Activated naive CD4-positive, alpha-beta T cell treated with anti-CD3 and anti-CD28 coated beads for 36 hours (primary cell): ENCODE measurements at regions of chr19 and their contacts with region 1.

Region 1: GRCh38 chr19:19732579-19733501 is at the start of gene ZNF14:
- DNase-seq: peak; percentile 98
- H3K4me3 Mint-ChIP-seq: peak within 1 kb of the TSS; percentile 97
- H3K27ac Mint-ChIP-seq: peak within 1 kb of the TSS; percentile 96
- H3K4me1 Mint-ChIP-seq: peaks cover 20% of the 10 kb centered on the region
- H3K27me3 Mint-ChIP-seq: no peaks in the 10 kb centered on the region
- total RNA-seq, gene ZNF14: 8.4 TPM

Region 2: DNA sequence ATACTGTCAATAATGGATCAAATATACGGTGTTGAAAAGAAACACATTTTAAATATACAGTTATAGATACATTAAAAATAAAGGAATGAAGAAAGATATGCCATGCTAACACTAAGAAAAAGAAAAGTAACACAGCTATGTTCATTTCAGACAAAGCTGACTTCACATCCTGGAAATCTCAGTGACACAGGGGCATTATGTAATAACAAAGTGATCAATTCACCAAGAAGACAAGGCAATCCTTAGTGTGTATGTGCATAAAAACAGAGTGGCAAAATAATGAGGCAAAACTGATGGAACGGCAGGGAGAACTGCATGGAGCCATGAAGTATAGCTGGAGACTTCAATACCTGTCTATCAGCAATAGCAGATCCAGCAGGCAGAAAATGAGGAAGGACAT is 13.0 kb before region 1 on chr19:
- CTCF ChIA-PET with region 1: interaction called, 4 read pairs
- intact Hi-C with region 1: loop called (anchors 1 kb)
- DNase-seq: no peak
- H3K4me3 Mint-ChIP-seq: no peak overlapping the region
- H3K27ac Mint-ChIP-seq: no peak overlapping the region
- H3K4me1 Mint-ChIP-seq: peaks cover 5% of the 10 kb centered on the region
- H3K27me3 Mint-ChIP-seq: no peaks in the 10 kb centered on the region

Region 3: DNA sequence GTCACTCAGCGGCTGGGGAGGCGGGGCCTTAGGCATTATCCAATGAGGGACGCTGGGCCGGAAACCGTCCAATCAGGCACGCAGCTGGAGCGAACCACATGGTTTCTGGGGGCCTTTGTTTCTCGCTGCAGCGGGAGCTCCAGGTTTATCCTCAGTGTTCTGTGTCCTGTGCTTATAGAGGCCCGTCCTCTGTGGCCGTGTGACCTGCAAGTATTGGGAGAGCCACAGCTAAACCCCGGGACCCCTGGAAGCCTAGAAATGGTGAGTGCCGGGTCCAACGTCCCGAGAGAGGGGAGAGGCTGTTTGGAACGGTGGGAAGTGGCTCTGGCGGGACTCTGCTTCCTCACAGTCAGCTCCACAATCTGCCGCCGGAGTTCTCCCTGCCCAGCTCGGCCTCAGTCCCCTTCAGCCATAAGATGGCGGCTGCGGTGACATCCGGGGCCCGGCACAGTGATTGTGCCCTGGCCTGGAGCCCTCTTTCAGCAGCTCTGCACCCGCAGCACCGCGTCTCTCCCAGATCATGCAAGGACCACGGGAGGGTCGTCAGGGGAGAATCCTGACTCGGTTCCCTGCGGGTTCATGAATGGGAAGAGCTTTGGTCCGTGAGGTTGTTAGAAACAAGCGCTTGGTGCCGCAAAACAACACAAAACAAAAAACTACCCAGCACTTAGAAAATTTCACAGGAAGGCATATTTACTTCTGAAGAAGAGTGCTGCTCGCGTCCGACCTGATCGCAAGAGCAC is 133.1 kb after region 1 on chr19 and contains the start of gene ZNF253:
- CTCF ChIA-PET with region 1: no interaction called
- intact Hi-C with region 1: loop called (anchors 1 kb)
- DNase-seq: peak; percentile 99
- H3K4me3 Mint-ChIP-seq: peak within 1 kb of the TSS; percentile 100
- H3K27ac Mint-ChIP-seq: peak within 1 kb of the TSS; percentile 99
- H3K4me1 Mint-ChIP-seq: peaks cover 26% of the 10 kb centered on the region
- H3K27me3 Mint-ChIP-seq: no peaks in the 10 kb centered on the region
- total RNA-seq, gene ZNF253: 6.1 to 9.6 TPM

Region 4: DNA sequence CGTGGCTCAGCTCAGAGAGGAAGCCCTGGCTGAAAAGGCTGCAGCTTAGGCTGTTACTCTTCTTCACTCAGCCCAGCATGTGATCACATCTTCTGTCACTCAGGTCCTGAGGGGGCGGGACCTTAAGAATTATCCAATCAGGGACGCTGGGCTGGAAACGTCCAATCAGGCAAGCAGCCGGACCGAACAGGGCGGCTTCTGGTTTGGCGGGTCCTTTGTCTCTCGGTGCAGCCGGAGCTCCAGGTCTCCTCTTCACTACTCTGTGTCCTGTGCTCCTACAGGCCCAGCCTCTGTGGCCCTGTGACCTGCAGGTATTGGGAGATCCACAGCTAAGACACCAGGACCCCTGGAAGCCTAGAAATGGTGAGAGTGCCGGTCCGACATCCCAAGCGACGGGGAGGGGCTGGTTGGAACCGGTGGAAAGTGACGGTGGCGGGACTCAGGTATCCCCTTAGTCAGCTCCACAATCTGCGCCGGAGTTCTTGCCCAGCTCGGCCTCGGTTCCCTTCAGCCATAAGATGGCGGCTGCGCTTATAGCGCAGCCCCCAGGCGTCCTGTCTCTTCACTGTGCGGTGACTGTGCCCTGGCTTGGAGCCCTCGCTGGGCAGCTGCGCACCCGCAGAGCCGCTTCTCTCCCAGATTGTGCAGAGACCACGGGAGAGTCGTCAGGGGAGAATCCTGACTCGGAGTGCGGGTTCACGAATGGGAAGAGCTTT is 168.0 kb after region 1 on chr19 and contains the start of gene ZNF93:
- CTCF ChIA-PET with region 1: no interaction called
- intact Hi-C with region 1: loop called (anchors 1 kb)
- DNase-seq: peak; percentile 98
- H3K4me3 Mint-ChIP-seq: peak within 1 kb of the TSS; percentile 97
- H3K27ac Mint-ChIP-seq: peak within 1 kb of the TSS; percentile 95
- H3K4me1 Mint-ChIP-seq: peaks cover 28% of the 10 kb centered on the region
- H3K27me3 Mint-ChIP-seq: no peaks in the 10 kb centered on the region
- total RNA-seq, gene ZNF93: 15.2 to 16.6 TPM